Endothelial cell of umbilical vein (primary cell): ENCODE measurements at regions of chr22 and their contacts with region 1.

Region 1: GRCh38 chr22:44684506-44685383 is 17.3 kb upstream of the PRR5 start:
- DNase-seq: peak; percentile 90
- H3K4me3 ChIP-seq: no peak overlapping the region
- H3K27ac ChIP-seq: peak overlapping the region; percentile 7
- H3K4me1 ChIP-seq: peaks cover 7% of the 10 kb centered on the region
- H3K27me3 ChIP-seq: no peaks in the 10 kb centered on the region
- CTCF ChIP-seq: peak; percentile 100
- POLR2A ChIP-seq: no peak

Region 2: DNA sequence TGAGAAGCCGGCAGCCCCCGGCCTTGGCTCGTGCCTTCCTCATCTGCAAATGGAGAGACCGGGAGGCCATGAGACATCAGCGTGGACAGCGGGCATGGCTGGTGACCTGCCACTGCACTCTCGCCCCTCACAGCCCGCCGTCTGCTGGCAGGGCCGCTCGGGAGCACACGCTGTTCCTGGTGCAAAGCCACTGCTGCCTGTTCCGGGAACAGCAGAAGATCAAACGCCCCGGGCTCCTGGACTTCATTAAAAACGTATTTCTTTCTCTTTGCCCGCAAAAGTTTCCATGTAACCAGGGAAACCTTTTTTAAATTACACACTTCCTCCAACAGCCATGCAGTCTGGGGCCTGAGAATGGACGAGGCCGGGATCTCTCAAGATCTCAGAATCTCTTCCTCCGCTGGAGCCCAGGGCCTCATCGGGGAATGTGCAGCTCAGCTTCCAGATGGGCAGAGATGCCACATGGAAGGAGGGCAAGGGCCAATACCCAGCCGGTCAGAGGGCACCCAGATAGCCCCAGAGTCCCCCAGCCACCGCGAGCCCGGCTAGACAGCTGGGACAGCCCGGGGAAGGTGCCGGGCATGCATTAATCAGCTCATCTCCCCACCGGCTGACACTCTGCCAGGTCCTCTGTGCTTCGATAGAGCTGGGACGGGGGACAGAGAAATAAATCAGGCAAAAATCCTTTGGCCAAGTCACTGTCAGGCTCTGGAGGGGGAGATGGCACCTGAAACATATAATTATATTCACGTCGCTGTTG is 45.6 kb before region 1 on chr22:
- CTCF ChIA-PET with region 1: interaction called, 9 read pairs
- POLR2A ChIA-PET with region 1: no interaction called
- dilution Hi-C with region 1: no loop called
- intact Hi-C with region 1: loop called (anchors 2 kb)
- DNase-seq: peak; percentile 36
- H3K4me3 ChIP-seq: no peak overlapping the region
- H3K27ac ChIP-seq: no peak overlapping the region
- H3K4me1 ChIP-seq: peaks cover 8% of the 10 kb centered on the region
- H3K27me3 ChIP-seq: no peaks in the 10 kb centered on the region
- CTCF ChIP-seq: no peak
- POLR2A ChIP-seq: no peak

Region 3: GRCh38 chr22:44669561-44669976 is 15.2 kb before region 1 on chr22:
- CTCF ChIA-PET with region 1: interaction called, 35 read pairs
- POLR2A ChIA-PET with region 1: no interaction called
- dilution Hi-C with region 1: no loop called
- intact Hi-C with region 1: loop called (anchors 2 kb)
- DNase-seq: no peak
- H3K4me3 ChIP-seq: no peak overlapping the region
- H3K27ac ChIP-seq: no peak overlapping the region
- H3K4me1 ChIP-seq: peaks cover 6% of the 10 kb centered on the region
- H3K27me3 ChIP-seq: peaks cover 0 to 2% of the 10 kb centered on the region in 2 experiments
- CTCF ChIP-seq: peak; percentile 38 to 59
- POLR2A ChIP-seq: no peak

Region 4: DNA sequence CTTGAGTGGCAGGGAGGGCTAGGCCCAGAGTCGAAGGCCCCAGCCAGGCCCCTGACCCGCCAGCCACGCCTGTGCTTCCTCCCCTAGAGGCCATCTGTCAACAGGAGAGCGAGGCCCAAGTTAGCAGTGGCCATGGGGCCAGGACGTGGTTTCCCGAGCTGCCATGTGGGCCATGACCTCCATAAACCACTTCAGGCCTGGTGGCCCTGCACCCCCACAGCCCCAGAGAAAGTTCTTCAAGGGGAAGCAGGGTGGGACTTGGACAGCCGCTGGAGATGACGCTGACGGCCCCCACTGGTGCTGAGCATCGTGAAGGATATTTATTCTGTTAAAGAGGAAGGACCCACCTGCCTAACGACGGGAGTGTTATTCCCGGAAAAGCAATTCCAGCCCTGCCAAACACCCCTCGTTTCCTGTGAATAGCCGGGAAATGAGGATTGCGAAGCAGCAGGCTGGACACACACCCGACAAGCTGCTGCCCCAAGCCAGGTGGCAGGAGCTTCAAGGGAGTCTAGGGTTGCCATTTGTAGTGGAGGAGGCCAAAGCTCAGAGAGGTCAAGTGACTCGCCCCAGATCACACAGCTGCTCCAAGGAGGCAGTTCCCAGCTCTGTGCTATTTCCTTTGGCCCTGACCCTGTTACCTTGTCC is 30.1 kb after region 1 on chr22:
- CTCF ChIA-PET with region 1: interaction called, 12 read pairs
- POLR2A ChIA-PET with region 1: no interaction called
- dilution Hi-C with region 1: no loop called
- intact Hi-C with region 1: no loop called
- DNase-seq: peak; percentile 48
- H3K4me3 ChIP-seq: no peak overlapping the region
- H3K27ac ChIP-seq: no peak overlapping the region
- H3K4me1 ChIP-seq: peaks cover 9% of the 10 kb centered on the region
- H3K27me3 ChIP-seq: no peaks in the 10 kb centered on the region
- CTCF ChIP-seq: no peak
- POLR2A ChIP-seq: no peak